HepG2 (cell line): ENCODE measurements at regions of chr12 and their contacts with region 1.

Region 1: GRCh38 chr12:121550974-121551634 is 29.7 kb downstream of the KDM2B start:
- DNase-seq: peak; percentile 99
- ATAC-seq: peak; percentile 95
- H3K4me3 ChIP-seq: 0 out of 6 replicates have a peak overlapping the region, but pooled peaks of 1 of the 3 experiments have one; percentile 37
- H3K27ac ChIP-seq: peak overlapping the region; percentile 60
- H3K4me1 ChIP-seq: peaks cover 53% of the 10 kb centered on the region
- H3K27me3 ChIP-seq: no peaks in the 10 kb centered on the region
- CTCF ChIP-seq: no peak
- EP300 ChIP-seq: peak; percentile 80 to 99; a peak in 3 of 4 replicates
- POLR2A ChIP-seq: no peak
- RAD21 ChIP-seq: no peak

Region 2: DNA sequence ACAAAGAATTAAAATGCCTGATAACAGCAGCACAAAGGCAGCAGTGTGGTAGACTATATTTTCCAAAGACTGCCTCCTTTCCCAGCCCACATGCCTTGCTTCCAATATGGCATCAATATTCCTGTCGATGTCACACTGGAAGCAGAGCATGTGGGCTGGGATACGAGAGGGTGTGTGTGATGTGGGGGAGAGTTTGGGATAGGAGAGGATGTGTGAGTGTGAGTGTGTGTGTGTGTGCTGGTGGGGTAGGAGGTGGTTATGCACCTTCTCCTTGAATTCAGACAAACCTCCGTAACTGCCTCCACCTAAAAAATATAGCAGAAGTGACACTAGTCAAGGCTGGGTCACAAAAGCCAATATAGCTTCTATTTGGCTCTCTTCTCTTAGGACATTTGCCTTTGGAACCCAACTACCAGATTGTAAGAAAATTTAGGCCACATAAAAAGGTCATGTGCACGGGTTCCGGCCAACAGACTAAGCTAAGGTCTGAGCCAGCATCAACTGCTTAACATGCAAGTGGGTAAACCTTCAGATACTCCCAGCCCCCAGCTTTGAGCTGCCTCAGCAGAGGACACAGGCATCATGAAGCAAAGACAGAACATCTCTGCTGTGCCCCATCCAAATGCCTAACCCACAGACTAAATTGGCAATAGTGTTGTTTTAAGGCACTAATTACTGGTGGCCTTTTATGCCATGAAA is 676.4 kb before region 1 on chr12:
- CTCF ChIA-PET with region 1: no interaction called
- POLR2A ChIA-PET with region 1: no interaction called
- in situ Hi-C with region 1: no loop called
- intact Hi-C with region 1: no loop called
- DNase-seq: no peak
- ATAC-seq: no peak
- H3K4me3 ChIP-seq: no peak overlapping the region
- H3K27ac ChIP-seq: no peak overlapping the region
- H3K4me1 ChIP-seq: no peaks in the 10 kb centered on the region
- H3K27me3 ChIP-seq: no peaks in the 10 kb centered on the region
- CTCF ChIP-seq: no peak
- EP300 ChIP-seq: no peak
- POLR2A ChIP-seq: no peak
- RAD21 ChIP-seq: no peak

Region 3: DNA sequence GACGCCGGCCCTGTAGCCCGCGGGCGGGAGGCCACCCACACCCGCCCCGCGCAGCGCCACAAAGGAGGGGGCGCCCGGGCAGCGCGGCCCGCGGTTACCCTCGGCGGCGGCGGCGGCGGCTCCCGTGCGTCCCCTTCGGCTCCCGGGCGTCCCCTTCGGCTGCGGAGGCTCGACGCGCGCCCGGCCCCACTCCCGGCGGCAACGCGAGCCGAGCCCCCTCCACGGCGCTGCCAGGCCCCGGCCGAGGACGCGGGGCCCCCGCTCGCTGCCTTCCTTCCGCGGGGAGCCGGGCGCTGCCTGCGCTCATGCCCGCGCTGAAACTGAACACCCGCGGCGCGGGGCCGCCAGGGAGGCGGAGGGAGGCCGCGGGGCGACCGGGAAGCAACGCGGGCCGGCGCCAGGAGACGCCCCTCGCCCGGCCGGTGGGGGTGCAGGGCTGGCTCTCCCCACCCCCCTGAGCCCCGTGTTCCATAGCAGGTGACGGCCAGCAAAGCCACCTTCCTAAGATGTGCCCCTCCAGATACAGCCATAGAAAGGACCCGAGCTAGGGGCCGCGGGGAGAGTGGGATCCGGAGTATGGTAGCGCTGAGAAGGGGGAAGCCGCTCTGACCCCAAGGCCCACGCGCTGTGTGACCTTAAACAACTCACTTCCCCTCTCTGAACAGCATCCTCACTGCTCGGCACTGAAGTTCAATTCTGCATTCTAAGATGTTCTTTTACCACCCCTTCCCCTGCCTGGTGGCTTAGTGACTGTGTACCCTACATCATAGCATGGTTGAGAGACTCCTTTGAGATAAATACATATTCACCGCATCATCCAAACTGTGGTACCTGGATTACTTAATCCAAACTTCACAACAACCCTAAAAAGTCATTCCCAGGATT is 13.0 kb before region 1 on chr12:
- CTCF ChIA-PET with region 1: no interaction called
- POLR2A ChIA-PET with region 1: interaction called, 7 read pairs
- in situ Hi-C with region 1: no loop called
- intact Hi-C with region 1: loop called (anchors 1 kb)
- DNase-seq: no peak
- ATAC-seq: peak; percentile 25
- H3K4me3 ChIP-seq: peak overlapping the region; percentile 62 to 75 (median 65); a peak in 5 of 6 replicates
- H3K27ac ChIP-seq: peak overlapping the region; percentile 78
- H3K4me1 ChIP-seq: peaks cover 39% of the 10 kb centered on the region
- H3K27me3 ChIP-seq: no peaks in the 10 kb centered on the region
- CTCF ChIP-seq: no peak
- EP300 ChIP-seq: no peak
- POLR2A ChIP-seq: no peak
- RAD21 ChIP-seq: no peak; the same call in 1 of the 2 replicates

Region 4: DNA sequence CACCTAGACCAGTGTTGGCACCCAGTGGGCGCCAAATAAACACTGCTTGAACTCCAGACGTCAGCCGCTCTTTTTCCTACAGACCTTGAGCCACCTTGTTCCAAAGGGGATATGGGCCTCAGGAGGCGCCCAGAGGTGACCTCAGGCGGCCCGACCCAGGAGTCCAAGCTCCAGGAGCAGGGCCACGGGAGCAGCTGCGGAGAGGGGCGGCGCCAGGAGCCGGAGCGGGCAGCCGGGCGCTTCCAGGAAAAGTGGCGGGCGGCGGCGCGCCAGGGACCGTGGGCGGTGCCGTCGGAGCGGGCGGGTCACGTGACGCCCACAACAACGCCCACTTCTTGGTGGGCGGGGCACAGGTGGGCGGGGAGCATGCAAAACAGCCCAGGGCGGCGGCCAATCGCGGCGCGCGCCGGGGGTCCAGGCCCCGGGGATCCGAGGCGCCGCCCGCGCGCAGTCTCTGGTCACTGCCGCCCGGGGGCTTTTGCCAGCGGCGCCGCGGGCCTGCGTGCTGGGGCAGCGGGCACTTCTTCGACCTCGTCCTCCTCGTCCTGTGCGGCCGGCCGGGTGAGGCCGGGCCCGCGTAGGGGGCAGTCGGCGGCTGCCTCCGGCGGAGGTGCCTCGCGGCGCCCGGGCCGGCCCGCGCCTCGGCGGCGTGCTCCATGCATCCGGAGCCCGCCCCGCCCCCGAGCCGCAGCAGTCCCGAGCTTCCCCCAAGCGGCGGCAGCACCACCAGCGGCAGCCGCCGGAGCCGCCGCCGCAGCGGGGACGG is 75.2 kb after region 1 on chr12 and contains the start of gene ORAI1:
- CTCF ChIA-PET with region 1: interaction called, 12 read pairs
- POLR2A ChIA-PET with region 1: interaction called, 14 read pairs
- in situ Hi-C with region 1: loop called (anchors 5 kb)
- intact Hi-C with region 1: loop called (anchors 2 kb)
- DNase-seq: peak; percentile 81
- ATAC-seq: peak; percentile 80
- H3K4me3 ChIP-seq: peak within 1 kb of the TSS; percentile 62 to 78 (median 70)
- H3K27ac ChIP-seq: peak within 1 kb of the TSS; percentile 82
- H3K4me1 ChIP-seq: peaks cover 59% of the 10 kb centered on the region
- H3K27me3 ChIP-seq: no peaks in the 10 kb centered on the region
- CTCF ChIP-seq: no peak; the same call in 1 of the 2 replicates
- EP300 ChIP-seq: peak in 1 of 2 experiments; percentile 37; a peak in 1 of 4 replicates
- POLR2A ChIP-seq: peak; percentile 77 to 91
- RAD21 ChIP-seq: peak; percentile 52; the same call in 1 of the 2 replicates
- total RNA-seq, gene ORAI1: 5.9 and 9.2 TPM in 2 replicates

Region 5: DNA sequence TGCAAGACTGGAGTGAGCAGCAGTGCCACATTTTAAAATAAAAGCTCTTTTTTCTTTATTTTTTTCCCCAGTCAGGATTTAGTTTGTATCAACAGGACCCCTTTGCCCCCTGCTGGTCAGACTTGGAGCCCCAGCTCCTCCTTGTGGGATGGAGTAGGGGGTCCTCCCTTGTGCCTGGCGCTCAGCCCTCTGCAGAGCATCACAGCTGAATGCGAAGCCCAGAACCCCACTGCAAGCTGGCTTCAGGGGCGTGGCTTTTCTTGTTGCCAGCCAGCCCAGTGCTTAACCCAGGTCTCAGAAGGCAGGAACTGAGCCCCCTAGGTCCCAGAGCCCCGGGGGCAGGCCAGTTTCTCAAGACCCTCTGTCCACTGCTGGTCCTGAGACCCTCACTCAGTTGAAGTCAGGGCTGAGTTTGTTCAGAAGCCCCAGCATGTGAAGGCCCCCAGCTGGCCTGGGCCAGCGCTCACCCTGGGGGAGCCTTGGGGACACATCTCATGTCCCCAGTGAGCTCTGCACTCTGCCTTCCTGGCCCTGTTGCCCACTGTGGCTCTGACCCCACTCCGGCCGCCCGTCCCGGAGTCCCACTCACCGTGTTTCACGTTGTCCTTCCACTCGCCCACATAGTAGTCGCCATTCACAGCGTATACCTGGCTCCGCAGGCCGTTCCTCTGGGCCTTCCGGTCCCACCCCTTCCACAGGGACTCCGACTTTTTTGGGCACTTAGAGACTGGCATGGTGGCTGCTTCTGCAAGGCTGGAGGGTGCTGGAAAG is 117.8 kb after region 1 on chr12:
- CTCF ChIA-PET with region 1: interaction called, 14 read pairs
- POLR2A ChIA-PET with region 1: interaction called, 8 read pairs
- in situ Hi-C with region 1: loop called (anchors 5 kb)
- intact Hi-C with region 1: loop called (anchors 2 kb)
- DNase-seq: peak; percentile 28
- ATAC-seq: peak; percentile 77
- H3K4me3 ChIP-seq: peak overlapping the region; percentile 14 to 55 (median 27); a peak in 5 of 6 replicates
- H3K27ac ChIP-seq: no peak overlapping the region
- H3K4me1 ChIP-seq: peaks cover 45% of the 10 kb centered on the region
- H3K27me3 ChIP-seq: no peaks in the 10 kb centered on the region; a peak in 1 of 5 replicates
- CTCF ChIP-seq: peak; percentile 60
- EP300 ChIP-seq: no peak
- POLR2A ChIP-seq: no peak
- RAD21 ChIP-seq: peak; percentile 57

Region 6: GRCh38 chr12:121678716-121679580 is 127.8 kb after region 1 on chr12:
- CTCF ChIA-PET with region 1: interaction called, 16 read pairs
- POLR2A ChIA-PET with region 1: no interaction called
- in situ Hi-C with region 1: no loop called
- intact Hi-C with region 1: loop called (anchors 5 kb)
- DNase-seq: no peak
- ATAC-seq: peak; percentile 37
- H3K4me3 ChIP-seq: peak overlapping the region in 1 of 3 experiments; percentile 22; a peak in 1 of 6 replicates
- H3K27ac ChIP-seq: no peak overlapping the region
- H3K4me1 ChIP-seq: peaks cover 18% of the 10 kb centered on the region
- H3K27me3 ChIP-seq: peaks cover 0 to 5% of the 10 kb centered on the region in 2 experiments; a peak in 1 of 5 replicates
- CTCF ChIP-seq: no peak
- EP300 ChIP-seq: no peak
- POLR2A ChIP-seq: no peak
- RAD21 ChIP-seq: no peak